AG04449 (cell line): ENCODE measurements at regions of chr11 and their contacts with region 1.

Region 1: GRCh38 chr11:76721755-76722677 is 51.5 kb upstream of the LRRC32 start:
- DNase-seq: no peak
- H3K4me3 ChIP-seq: no peak overlapping the region
- CTCF ChIP-seq: peak; percentile 94

Region 2: GRCh38 chr11:76598426-76598839 is 123.6 kb before region 1 on chr11:
- CTCF ChIA-PET with region 1: interaction called, 17 read pairs
- POLR2A ChIA-PET with region 1: no interaction called
- DNase-seq: no peak
- H3K4me3 ChIP-seq: no peak overlapping the region
- CTCF ChIP-seq: peak; percentile 62

Region 3: GRCh38 chr11:76706672-76707071 is 15.3 kb before region 1 on chr11:
- CTCF ChIA-PET with region 1: interaction called, 44 read pairs
- POLR2A ChIA-PET with region 1: no interaction called
- DNase-seq: no peak
- H3K4me3 ChIP-seq: no peak overlapping the region
- CTCF ChIP-seq: no peak

Region 4: DNA sequence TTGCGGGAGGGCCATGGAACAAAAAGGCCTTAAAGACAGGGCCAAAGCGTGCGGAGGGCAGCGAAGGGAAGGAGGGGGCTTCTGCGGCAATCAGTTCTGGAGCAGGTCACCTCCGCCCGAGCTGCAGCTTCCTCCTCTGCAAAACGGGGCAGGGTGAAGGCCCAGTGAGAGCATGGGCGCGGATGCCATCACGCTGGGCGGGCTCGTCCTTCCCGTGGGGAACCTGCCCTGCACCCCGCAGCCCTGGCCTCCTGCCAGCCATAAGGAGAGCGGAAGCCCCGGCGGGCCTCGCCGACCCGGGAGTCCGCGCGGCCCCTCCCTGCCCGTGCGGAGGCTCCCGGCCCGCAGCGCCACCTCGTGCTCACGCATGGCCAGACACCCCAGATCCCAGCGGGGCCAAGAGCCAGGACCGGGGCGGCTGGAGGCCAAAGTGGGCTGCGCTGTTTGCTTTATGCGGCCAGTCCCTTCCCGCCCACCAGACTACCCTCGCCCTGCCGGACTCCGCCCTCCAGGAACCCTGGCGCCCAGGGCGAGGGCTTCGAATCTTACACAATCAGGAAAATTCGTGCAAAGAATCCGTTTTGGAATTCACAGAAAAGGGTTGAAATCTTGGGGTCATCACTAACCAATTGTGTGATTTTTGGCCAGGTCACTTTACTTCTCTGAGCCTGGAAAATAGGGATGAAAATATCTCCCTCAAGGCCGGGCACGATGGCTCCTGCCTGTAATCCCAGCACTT is 77.2 kb after region 1 on chr11:
- CTCF ChIA-PET with region 1: interaction called, 419 read pairs
- POLR2A ChIA-PET with region 1: no interaction called
- DNase-seq: no peak
- H3K4me3 ChIP-seq: peak overlapping the region; percentile 18
- CTCF ChIP-seq: peak; percentile 92

Region 5: GRCh38 chr11:77039491-77040400 is 317.7 kb after region 1 on chr11:
- CTCF ChIA-PET with region 1: interaction called, 12 read pairs
- POLR2A ChIA-PET with region 1: no interaction called
- DNase-seq: no peak
- H3K4me3 ChIP-seq: peak overlapping the region; percentile 49
- CTCF ChIP-seq: peak; percentile 69